SK-N-SH (cell line): ENCODE measurements at regions of chr1 and their contacts with region 1.

Region 1: DNA sequence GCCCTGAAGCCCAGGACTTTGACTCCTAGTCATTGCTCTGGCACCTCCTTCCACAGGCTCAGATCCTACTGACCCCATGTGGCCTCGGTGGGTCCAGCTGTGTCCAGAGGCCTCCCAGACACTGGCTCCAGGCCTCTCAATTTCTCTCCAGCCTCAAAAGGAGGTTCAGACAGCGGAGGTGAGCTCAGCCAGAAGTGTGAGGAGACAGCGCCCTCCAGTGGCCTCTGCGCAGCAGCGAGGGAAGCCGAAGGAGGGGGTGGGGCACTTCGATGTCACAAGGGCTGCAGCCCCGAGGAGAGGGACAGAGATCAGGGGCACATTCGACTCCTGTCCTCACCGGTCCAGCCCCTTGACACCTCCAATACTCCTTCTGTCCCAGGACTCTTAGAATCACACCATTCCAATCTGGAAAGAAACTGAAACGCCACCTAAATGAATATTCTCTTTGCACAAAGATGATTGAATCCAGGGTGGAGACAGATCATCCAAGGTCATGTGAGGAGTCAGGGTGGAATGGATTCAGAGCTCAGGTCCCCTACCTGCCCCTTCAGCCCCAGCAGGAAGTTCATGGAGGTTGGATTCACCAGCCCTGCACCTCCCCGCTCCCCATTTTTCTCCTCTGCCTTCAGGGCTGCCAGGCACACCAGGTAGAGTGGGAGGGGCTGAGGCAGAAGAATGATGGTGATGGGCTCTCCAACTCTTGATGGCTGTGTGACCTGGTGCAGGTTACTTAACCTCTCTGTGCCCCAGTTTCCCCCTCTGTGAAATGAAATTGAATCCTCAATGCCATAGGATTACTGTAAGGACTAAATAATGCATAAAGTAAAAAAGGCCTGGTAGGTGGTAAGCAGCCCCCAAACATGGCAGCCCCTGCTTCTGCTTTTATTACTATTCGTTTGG is 34.8 kb upstream of the ZBTB40 start:
- DNase-seq: peak; percentile 84
- H3K4me3 ChIP-seq: 0 out of 4 replicates have a peak overlapping the region, but pooled peaks have one; percentile 9 to 45
- H3K27ac ChIP-seq: no peak overlapping the region; a peak in 1 of 4 replicates
- H3K4me1 ChIP-seq: peaks cover 7 to 26% of the 10 kb centered on the region in 2 experiments; a peak in 2 of 4 replicates
- H3K27me3 ChIP-seq: no peaks in the 10 kb centered on the region
- CTCF ChIP-seq: peak; percentile 97
- EP300 ChIP-seq: no peak
- RAD21 ChIP-seq: peak; percentile 98

Region 2: DNA sequence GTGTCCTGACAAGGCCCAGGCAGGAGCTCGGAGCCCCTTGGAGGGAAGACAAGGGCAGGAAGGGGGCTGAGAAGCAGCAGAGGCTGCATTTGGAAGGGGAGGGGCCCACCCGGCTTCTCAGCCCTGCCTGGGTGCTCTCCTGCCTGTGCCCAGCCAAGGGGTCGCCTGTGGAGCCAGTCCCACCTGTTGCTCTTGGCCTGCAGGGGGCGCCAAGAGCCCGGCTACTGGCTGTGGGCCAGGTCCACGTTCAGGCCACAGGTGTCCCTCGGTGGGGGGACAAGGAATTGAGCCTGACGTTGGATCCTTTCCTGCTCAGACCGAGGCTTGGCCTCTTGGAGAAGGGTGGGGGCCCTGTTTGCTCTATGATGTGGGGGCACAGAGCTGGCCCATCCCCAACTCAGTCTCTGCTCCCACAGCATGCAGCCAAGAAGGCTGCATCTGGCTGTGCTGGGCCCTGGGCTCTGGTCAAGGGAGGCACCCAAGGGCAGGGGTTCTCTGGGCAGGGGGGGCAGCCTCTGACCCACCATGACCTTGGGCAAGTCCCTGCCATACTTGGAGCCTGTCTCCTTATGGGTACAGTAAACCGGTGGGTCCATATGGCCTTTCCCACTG is 284.8 kb before region 1 on chr1:
- CTCF ChIA-PET with region 1: interaction called, 173 read pairs
- POLR2A ChIA-PET with region 1: no interaction called
- DNase-seq: peak; percentile 92
- H3K4me3 ChIP-seq: no peak overlapping the region; a peak in 1 of 4 replicates
- H3K27ac ChIP-seq: no peak overlapping the region
- H3K4me1 ChIP-seq: peaks cover 7 to 13% of the 10 kb centered on the region in 2 experiments; a peak in 3 of 4 replicates
- H3K27me3 ChIP-seq: no peaks in the 10 kb centered on the region
- CTCF ChIP-seq: peak; percentile 75
- EP300 ChIP-seq: no peak
- RAD21 ChIP-seq: peak; percentile 87

Region 3: GRCh38 chr1:22314706-22315397 is 102.0 kb before region 1 on chr1:
- CTCF ChIA-PET with region 1: interaction called, 15 read pairs
- POLR2A ChIA-PET with region 1: no interaction called
- DNase-seq: no peak
- H3K4me3 ChIP-seq: no peak overlapping the region
- H3K27ac ChIP-seq: peak overlapping the region in 1 of 2 experiments; percentile 64; a peak in 1 of 4 replicates
- H3K4me1 ChIP-seq: peaks cover 0 to 42% of the 10 kb centered on the region in 2 experiments; a peak in 2 of 4 replicates
- H3K27me3 ChIP-seq: no peaks in the 10 kb centered on the region
- CTCF ChIP-seq: no peak
- EP300 ChIP-seq: no peak
- RAD21 ChIP-seq: no peak

Region 4: GRCh38 chr1:22572818-22573217 is 156.0 kb after region 1 on chr1:
- CTCF ChIA-PET with region 1: interaction called, 10 read pairs
- POLR2A ChIA-PET with region 1: no interaction called
- DNase-seq: peak; percentile 96
- H3K4me3 ChIP-seq: no peak overlapping the region; a peak in 1 of 4 replicates
- H3K27ac ChIP-seq: peak overlapping the region in 1 of 2 experiments; percentile 96; a peak in 2 of 4 replicates
- H3K4me1 ChIP-seq: peaks cover 0 to 47% of the 10 kb centered on the region in 2 experiments; a peak in 2 of 4 replicates
- H3K27me3 ChIP-seq: peaks cover 26% of the 10 kb centered on the region
- CTCF ChIP-seq: no peak
- EP300 ChIP-seq: peak in 1 of 2 experiments; percentile 88; a peak in 2 of 4 replicates
- RAD21 ChIP-seq: peak; percentile 25

Region 5: DNA sequence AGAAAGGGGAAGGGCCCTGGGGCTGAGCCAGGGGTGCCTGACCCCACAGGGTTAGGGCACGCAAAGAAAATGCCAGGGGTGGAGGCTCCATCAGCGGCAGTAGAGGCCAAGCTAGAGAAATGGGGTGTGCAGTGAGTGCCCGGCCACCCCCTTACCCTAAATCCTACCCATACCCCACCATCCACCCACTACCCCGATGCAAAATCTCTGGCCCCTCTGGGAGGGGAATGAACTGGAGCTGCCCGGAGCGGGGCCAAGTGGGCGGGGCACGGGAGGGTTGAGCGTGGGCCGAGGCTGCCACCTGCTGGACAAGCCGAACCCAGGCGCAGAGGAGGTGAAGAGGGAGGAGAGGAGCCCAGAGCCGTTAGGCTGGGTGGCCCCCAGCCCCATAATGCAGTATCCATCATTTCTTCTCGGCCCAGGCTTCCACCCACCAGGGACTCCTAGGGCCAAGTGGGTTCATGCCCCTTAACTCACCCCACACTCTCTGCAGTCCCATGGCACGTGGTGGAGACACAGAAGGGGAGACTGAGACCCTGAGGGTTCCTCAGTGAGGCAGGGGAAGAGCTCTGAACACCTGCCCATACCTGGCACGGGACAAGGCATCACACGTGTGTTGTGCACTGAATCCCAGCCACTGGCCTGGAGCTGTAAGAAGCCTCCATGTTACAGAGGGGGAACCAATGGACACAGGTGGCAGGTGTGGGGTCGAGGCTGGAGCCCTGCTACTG is 225.3 kb after region 1 on chr1:
- CTCF ChIA-PET with region 1: interaction called, 176 read pairs
- POLR2A ChIA-PET with region 1: no interaction called
- DNase-seq: peak; percentile 95
- H3K4me3 ChIP-seq: no peak overlapping the region; a peak in 1 of 4 replicates
- H3K27ac ChIP-seq: no peak overlapping the region
- H3K4me1 ChIP-seq: peaks cover 0 to 11% of the 10 kb centered on the region in 2 experiments; a peak in 1 of 4 replicates
- H3K27me3 ChIP-seq: no peaks in the 10 kb centered on the region
- CTCF ChIP-seq: peak; percentile 84
- EP300 ChIP-seq: no peak
- RAD21 ChIP-seq: peak; percentile 94